BJ (cell line): ENCODE measurements at regions of chr19 and their contacts with region 1.

Region 1: DNA sequence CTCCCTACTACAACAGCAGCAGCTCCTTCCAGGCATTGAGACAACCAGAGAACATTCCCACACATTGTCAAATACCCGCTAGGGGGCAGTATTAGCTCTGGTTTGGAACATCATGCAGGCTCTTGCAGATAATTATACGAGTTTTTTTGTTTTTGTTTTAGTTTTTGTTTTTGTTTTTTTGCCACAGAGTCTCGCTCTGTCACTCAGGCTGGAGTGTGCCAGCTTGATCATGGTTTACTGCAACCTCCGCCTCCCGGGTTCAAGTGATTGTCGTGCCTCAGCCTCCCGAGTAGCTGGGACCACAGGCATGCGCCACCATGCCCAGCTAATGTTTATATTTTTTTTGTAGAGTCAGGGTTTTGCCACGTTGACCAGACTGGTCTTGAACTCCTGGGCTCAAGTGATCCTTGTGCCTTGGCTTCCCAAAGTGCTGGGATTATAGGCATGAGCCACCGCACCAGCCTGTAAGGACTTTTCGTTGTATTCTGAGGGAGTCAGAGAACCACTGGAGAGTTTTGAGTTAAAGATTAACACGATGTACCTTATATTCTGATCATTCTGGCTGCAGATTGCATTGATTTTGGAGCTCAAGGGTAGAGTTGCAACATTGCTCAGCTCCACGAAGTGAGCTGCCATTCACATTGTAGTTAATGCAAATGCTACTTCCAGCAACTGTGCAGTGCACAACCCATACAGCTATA is 41.7 kb upstream of the CEACAM20 start:
- DNase-seq: peak; percentile 19
- H3K4me3 ChIP-seq: no peak overlapping the region
- H3K27me3 ChIP-seq: peaks cover 11% of the 10 kb centered on the region
- CTCF ChIP-seq: peak; percentile 72

Region 2: DNA sequence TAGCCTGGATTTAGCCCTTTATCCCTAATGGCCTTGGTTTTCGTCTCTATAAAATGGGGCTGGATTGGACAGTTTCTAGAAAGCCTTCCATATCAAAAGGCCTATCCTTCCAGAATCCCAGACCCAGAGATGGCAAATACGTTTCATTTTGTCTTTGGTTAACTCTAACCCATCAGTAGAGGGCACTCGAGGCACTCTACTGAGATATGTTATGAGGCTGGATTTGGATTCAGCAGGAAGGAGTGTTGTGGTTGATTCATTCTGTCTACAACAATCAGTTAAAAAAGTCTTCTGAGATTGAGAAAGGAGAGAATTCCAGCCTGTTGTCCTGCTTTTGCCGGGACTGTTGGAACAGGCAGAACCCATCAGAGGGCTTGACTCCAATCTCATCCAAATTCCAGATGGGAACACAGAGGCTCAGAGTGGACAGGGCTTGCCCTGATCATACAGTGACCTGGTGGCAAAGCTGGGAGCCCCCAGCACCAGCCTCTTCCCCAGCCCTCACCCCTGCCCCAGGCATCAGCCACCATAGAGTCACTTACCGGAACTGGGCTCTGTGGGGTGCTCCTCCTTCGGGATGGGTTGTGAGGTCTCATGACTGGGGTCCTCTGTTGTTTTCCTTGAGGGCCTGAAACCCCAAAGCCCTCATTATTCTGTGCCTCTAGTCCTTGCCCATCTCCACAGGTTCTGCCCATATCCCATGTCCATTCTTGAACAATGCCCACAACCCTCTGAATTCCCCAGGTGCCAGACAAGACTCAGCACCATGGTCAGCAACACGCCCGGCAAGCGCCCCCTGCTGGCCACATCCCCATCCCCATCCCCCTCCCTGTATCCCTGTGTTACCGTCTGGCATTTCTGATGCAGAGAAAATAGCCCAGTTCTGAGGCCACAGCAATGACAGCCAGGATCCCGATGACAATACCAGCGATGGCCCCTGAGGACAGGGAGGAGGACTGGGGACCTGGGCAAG is 58.5 kb before region 1 on chr19:
- CTCF ChIA-PET with region 1: no interaction called
- POLR2A ChIA-PET with region 1: no interaction called
- DNase-seq: no peak
- H3K4me3 ChIP-seq: no peak overlapping the region
- H3K27me3 ChIP-seq: no peaks in the 10 kb centered on the region
- CTCF ChIP-seq: peak; percentile 61

Region 3: DNA sequence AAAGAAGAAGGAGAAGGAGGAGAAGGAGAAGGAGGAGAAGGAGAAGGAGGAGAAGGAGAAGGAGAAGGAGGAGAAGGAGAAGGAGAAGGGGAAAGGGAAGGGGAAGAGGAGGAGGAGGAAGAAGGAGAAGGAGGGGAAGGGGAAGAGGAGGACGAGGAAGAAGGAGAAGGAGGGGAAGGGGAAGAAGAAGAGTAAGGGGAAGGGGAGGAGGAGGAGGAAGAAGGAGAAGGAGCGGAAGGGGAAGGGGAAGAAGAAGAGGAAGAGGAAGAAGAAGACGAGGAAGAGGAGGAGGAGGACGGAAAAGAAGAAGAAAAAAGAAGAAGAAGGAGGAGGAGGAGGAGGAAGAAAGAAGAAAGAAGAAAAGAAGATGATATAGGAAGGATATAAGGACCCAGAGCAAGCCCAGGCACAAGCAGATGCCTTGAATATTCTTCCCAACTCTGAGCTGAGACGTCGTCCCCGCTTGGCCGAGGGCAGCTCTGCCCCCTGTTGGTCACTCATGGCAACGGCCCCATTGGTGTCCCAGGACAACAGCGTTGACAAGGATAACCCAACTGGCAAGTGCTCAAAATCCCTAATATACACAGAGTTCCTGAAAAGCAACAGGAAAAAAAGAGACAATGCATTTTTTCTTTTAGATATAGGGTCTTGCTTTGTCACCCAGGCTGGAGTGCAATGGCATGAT is 11.6 kb after region 1 on chr19:
- CTCF ChIA-PET with region 1: interaction called, 32 read pairs
- POLR2A ChIA-PET with region 1: no interaction called
- DNase-seq: no peak
- H3K4me3 ChIP-seq: no peak overlapping the region
- H3K27me3 ChIP-seq: no peaks in the 10 kb centered on the region
- CTCF ChIP-seq: peak; percentile 58

Region 4: DNA sequence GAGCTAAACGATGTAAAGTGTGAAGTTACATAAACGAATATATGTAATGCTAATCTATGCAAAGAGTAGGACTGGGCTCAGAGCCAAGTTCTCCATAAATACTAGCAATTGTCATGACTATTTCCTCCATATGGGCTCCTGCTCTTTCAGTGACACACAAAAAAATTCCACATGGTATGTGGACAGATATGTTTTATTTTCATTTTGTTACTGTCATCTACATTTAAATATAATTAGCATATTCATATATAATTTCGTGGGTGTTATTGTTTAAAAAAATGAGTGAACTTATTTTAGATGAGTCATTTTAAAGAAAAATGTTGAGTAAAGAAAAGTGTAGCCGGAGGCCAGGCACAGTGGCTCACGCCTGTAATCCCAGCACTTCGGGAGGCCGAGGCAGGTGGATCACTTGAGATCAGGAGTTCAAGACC is 37.3 kb after region 1 on chr19:
- CTCF ChIA-PET with region 1: interaction called, 13 read pairs
- POLR2A ChIA-PET with region 1: no interaction called
- DNase-seq: no peak
- H3K4me3 ChIP-seq: no peak overlapping the region
- H3K27me3 ChIP-seq: no peaks in the 10 kb centered on the region
- CTCF ChIP-seq: no peak

Region 5: DNA sequence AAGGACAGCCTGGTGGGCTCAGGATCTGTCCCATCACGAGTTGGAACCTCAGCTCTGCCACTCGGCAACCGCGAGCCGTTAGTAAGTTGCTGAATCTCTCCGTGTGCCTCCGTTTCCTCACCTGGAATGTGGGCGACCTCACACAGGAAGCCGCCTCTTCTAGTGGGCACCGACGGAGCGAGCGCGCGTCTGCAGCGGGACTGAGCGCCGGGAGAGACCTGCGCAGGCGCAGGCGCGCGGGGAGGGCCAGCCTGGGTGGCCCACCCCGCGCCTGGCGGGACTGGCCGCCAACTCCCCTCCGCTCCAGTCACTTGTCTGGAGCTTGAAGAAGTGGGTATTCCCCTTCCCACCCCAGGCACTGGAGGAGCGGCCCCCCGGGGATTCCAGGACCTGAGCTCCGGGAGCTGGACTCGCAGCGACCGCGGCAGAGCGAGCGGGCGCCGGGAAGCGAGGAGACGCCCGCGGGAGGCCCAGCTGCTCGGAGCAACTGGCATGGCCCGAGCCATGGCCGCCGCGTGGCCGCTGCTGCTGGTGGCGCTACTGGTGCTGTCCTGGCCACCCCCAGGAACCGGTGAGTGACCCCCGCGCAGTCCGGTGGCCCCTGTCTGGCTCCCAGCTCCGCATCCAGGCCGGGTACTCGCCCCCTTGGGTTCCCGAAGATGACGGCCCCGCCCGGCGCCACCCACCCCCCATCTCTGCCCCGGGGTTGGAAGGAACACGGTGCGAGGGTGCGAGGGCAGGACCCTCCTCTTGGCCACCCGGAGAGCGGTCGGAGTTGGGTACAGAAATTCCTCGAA is 72.7 kb after region 1 on chr19 and contains the start of gene PVR:
- CTCF ChIA-PET with region 1: interaction called, 26 read pairs
- POLR2A ChIA-PET with region 1: no interaction called
- DNase-seq: no peak
- H3K4me3 ChIP-seq: peak within 1 kb of the TSS; percentile 93
- H3K27me3 ChIP-seq: no peaks in the 10 kb centered on the region
- CTCF ChIP-seq: peak; percentile 19; the same call in 1 of the 2 replicates
- polyA plus RNA-seq, gene PVR: 84.4 and 129 TPM in 2 replicates

Region 6: DNA sequence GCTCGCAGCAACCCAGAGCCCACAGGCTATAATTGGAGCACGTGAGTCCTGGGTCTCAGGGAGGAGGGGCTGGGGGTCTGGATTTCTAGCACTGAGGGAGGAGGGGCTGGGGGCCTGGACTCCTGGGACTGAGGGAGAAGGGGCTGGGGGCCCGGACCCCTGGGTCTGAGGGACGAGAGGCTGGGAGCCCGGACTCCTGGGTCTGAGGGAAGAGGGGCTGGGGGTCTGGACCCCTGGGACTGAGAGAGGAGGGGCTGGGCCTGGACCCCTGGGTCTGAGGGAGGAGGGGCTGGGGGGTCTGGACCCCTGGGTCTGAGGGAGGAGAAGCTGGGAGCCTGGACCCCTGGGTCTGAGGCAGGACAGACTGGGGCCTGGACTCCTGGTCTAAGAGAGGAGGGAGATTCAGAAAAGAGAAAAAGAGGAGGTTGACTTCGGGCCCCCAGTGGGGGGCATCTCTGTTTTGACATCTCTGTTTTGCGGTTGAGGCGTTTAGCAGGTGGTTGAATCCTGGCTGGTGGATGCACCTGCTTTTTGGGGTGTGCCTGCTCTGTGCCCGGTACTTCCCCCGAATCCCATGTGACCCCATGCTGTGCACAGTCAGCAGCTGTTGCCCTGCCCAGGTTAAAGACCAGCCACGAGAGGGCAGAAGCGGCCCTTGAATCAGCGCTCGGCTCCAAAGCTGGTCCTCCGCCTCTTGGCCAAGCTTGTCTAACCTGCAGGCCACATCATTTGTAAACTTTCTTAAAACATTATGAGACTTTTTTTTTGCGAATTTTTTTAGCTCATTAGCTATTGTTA is 83.0 kb after region 1 on chr19:
- CTCF ChIA-PET with region 1: interaction called, 82 read pairs
- POLR2A ChIA-PET with region 1: no interaction called
- DNase-seq: no peak
- H3K4me3 ChIP-seq: no peak overlapping the region
- H3K27me3 ChIP-seq: no peaks in the 10 kb centered on the region
- CTCF ChIP-seq: peak; percentile 50

Region 7: DNA sequence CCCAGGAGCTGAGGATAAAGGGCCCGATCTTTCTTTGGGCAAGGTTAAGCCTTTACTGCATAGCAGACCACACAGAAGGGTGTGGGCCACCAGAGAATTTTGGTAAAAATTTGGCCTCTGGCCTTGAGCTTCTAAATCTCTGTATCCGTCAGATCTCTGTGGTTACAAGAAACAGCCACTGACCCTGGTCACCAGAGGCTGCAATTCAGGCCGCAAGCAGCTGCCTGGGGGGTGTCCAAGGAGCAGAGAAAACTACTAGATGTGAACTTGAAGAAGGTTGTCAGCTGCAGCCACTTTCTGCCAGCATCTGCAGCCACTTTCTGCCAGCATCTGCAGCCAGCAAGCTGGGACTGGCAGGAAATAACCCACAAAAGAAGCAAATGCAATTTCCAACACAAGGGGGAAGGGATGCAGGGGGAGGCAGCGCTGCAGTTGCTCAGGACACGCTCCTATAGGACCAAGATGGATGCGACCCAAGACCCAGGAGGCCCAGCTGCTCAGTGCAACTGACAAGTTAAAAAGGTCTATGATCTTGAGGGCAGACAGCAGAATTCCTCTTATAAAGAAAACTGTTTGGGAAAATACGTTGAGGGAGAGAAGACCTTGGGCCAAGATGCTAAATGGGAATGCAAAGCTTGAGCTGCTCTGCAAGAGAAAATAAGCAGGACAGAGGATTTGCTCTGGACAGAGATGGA is 91.7 kb after region 1 on chr19:
- CTCF ChIA-PET with region 1: interaction called, 82 read pairs
- POLR2A ChIA-PET with region 1: no interaction called
- DNase-seq: no peak
- H3K4me3 ChIP-seq: no peak overlapping the region
- H3K27me3 ChIP-seq: no peaks in the 10 kb centered on the region
- CTCF ChIP-seq: no peak

Region 8: GRCh38 chr19:44741841-44742352 is 170.8 kb after region 1 on chr19:
- CTCF ChIA-PET with region 1: no interaction called
- POLR2A ChIA-PET with region 1: no interaction called
- DNase-seq: peak; percentile 98
- H3K4me3 ChIP-seq: no peak overlapping the region
- H3K27me3 ChIP-seq: no peaks in the 10 kb centered on the region
- CTCF ChIP-seq: no peak

Region 9: GRCh38 chr19:44770550-44771257 is 199.6 kb after region 1 on chr19:
- CTCF ChIA-PET with region 1: interaction called, 23 read pairs
- POLR2A ChIA-PET with region 1: no interaction called
- DNase-seq: peak; percentile 44
- H3K4me3 ChIP-seq: no peak overlapping the region
- H3K27me3 ChIP-seq: no peaks in the 10 kb centered on the region
- CTCF ChIP-seq: peak; percentile 72